ENCODE measurements at regions of chr3 and their contacts with region 1.

Region 1: DNA sequence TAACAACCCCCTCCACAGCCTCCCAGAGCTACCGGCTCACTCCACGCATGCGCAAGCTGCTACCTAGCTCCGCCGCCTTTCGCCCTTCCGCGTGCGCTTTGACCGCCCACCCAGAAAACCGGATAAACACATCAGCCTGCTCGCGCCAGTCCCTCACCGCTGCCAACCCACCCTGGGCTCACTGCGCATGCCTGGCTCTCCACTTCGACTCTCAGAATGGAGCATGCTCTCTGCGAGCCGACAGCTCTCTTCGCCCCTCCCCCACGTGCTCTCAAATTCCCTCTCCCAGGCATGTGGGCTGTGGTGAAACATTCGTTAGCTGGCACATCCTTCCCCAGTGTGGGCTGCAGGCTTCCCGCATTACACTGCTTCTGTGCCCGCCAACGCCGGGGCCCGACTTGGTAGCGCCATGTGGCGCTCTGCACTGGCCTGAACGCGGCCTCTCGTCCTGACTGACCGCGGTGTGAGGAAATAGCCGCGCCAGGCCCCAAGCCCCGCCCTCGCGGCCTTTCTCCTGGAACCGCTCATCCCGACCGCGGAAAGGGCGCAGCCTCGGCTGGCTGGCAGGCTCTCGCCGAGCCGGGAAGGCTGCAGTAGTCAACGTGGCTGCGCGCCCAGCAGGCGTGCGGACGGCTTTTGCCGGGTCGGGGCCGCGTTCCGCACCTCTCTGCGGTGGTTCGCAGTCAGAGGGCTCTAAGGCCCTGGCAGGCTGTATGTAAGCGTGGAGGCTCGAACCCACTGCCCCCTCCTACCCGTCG is 445 bp upstream of the MSL2 start:
- DNase-seq: peak; percentile 95 to 100 (median 98)
- ATAC-seq: peak; percentile 62
- H3K4me3 ChIP-seq: peak overlapping the region; percentile 95
- H3K4me3 Mint-ChIP-seq: peak overlapping the region; percentile 98
- H3K27ac ChIP-seq: peak overlapping the region; percentile 91 to 99
- H3K27ac Mint-ChIP-seq: peak overlapping the region; percentile 98
- H3K4me1 ChIP-seq: peaks cover 16% of the 10 kb centered on the region
- H3K4me1 Mint-ChIP-seq: peaks cover 36% of the 10 kb centered on the region
- H3K27me3 ChIP-seq: no peaks in the 10 kb centered on the region
- H3K27me3 Mint-ChIP-seq: peaks cover 5% of the 10 kb centered on the region
- CTCF ChIP-seq: no peak

Region 2: GRCh38 chr3:135655328-135655727 is 541.3 kb before region 1 on chr3:
- CTCF ChIA-PET with region 1: no interaction called
- POLR2A ChIA-PET with region 1: no interaction called
- intact Hi-C with region 1: no loop called
- DNase-seq: no peak
- ATAC-seq: no peak
- H3K4me3 ChIP-seq: no peak overlapping the region
- H3K4me3 Mint-ChIP-seq: no peak overlapping the region
- H3K27ac ChIP-seq: no peak overlapping the region
- H3K27ac Mint-ChIP-seq: no peak overlapping the region
- H3K4me1 ChIP-seq: no peaks in the 10 kb centered on the region
- H3K4me1 Mint-ChIP-seq: no peaks in the 10 kb centered on the region
- H3K27me3 ChIP-seq: no peaks in the 10 kb centered on the region
- H3K27me3 Mint-ChIP-seq: no peaks in the 10 kb centered on the region
- CTCF ChIP-seq: no peak

Region 3: GRCh38 chr3:135950941-135951340 is 245.6 kb before region 1 on chr3:
- CTCF ChIA-PET with region 1: no interaction called
- POLR2A ChIA-PET with region 1: no interaction called
- intact Hi-C with region 1: no loop called
- DNase-seq: no peak
- ATAC-seq: no peak
- H3K4me3 ChIP-seq: no peak overlapping the region
- H3K4me3 Mint-ChIP-seq: no peak overlapping the region
- H3K27ac ChIP-seq: no peak overlapping the region
- H3K27ac Mint-ChIP-seq: no peak overlapping the region
- H3K4me1 ChIP-seq: no peaks in the 10 kb centered on the region
- H3K4me1 Mint-ChIP-seq: no peaks in the 10 kb centered on the region
- H3K27me3 ChIP-seq: peaks cover 0 to 2% of the 10 kb centered on the region in 2 experiments
- H3K27me3 Mint-ChIP-seq: peaks cover 19% of the 10 kb centered on the region
- CTCF ChIP-seq: no peak

Region 4: GRCh38 chr3:136142592-136142991 is 54.0 kb before region 1 on chr3:
- CTCF ChIA-PET with region 1: interaction called, 3 read pairs
- POLR2A ChIA-PET with region 1: interaction called, 10 read pairs
- intact Hi-C with region 1: no loop called
- DNase-seq: peak in 1 of 14 experiments; percentile 19
- ATAC-seq: peak; percentile 47
- H3K4me3 ChIP-seq: no peak overlapping the region
- H3K4me3 Mint-ChIP-seq: no peak overlapping the region
- H3K27ac ChIP-seq: no peak overlapping the region
- H3K27ac Mint-ChIP-seq: peak overlapping the region; percentile 3
- H3K4me1 ChIP-seq: no peaks in the 10 kb centered on the region
- H3K4me1 Mint-ChIP-seq: peaks cover 23% of the 10 kb centered on the region
- H3K27me3 ChIP-seq: no peaks in the 10 kb centered on the region
- H3K27me3 Mint-ChIP-seq: no peaks in the 10 kb centered on the region
- CTCF ChIP-seq: no peak

Region 5: GRCh38 chr3:136149667-136150066 is 46.9 kb before region 1 on chr3:
- CTCF ChIA-PET with region 1: interaction called, 3 read pairs
- POLR2A ChIA-PET with region 1: interaction called, 10 read pairs
- intact Hi-C with region 1: loop called (anchors 5 kb)
- DNase-seq: no peak
- ATAC-seq: no peak
- H3K4me3 ChIP-seq: no peak overlapping the region
- H3K4me3 Mint-ChIP-seq: peak overlapping the region; percentile 22
- H3K27ac ChIP-seq: no peak overlapping the region
- H3K27ac Mint-ChIP-seq: peak overlapping the region; percentile 61
- H3K4me1 ChIP-seq: peaks cover 6% of the 10 kb centered on the region
- H3K4me1 Mint-ChIP-seq: peaks cover 67% of the 10 kb centered on the region
- H3K27me3 ChIP-seq: no peaks in the 10 kb centered on the region
- H3K27me3 Mint-ChIP-seq: no peaks in the 10 kb centered on the region
- CTCF ChIP-seq: no peak

Region 6: GRCh38 chr3:136186344-136186743 is 10.2 kb before region 1 on chr3:
- CTCF ChIA-PET with region 1: interaction called, 3 read pairs
- POLR2A ChIA-PET with region 1: interaction called, 22 read pairs
- intact Hi-C with region 1: loop called in 1 of 2 experiments (anchors 1 kb)
- DNase-seq: peak in 7 of 14 experiments; percentile 13 to 49 (median 37)
- ATAC-seq: peak; percentile 52
- H3K4me3 ChIP-seq: no peak overlapping the region
- H3K4me3 Mint-ChIP-seq: peak overlapping the region; percentile 70
- H3K27ac ChIP-seq: peak overlapping the region in 1 of 2 donors; percentile 24
- H3K27ac Mint-ChIP-seq: peak overlapping the region; percentile 30
- H3K4me1 ChIP-seq: peaks cover 88% of the 10 kb centered on the region
- H3K4me1 Mint-ChIP-seq: peaks cover 93% of the 10 kb centered on the region
- H3K27me3 ChIP-seq: no peaks in the 10 kb centered on the region
- H3K27me3 Mint-ChIP-seq: no peaks in the 10 kb centered on the region
- CTCF ChIP-seq: no peak

Region 7: GRCh38 chr3:136250226-136250902 is 53.8 kb after region 1 on chr3 and contains the start of gene PCCB:
- CTCF ChIA-PET with region 1: interaction called, 10 read pairs
- POLR2A ChIA-PET with region 1: interaction called, 51 read pairs
- intact Hi-C with region 1: loop called (anchors 1 kb)
- DNase-seq: peak; percentile 85 to 96 (median 90)
- ATAC-seq: peak; percentile 95
- H3K4me3 ChIP-seq: peak within 1 kb of the TSS; percentile 63
- H3K4me3 Mint-ChIP-seq: peak within 1 kb of the TSS; percentile 91
- H3K27ac ChIP-seq: peak within 1 kb of the TSS; percentile 72 to 78
- H3K27ac Mint-ChIP-seq: peak within 1 kb of the TSS; percentile 85
- H3K4me1 ChIP-seq: peaks cover 23% of the 10 kb centered on the region
- H3K4me1 Mint-ChIP-seq: peaks cover 23% of the 10 kb centered on the region
- H3K27me3 ChIP-seq: no peaks in the 10 kb centered on the region
- H3K27me3 Mint-ChIP-seq: no peaks in the 10 kb centered on the region
- CTCF ChIP-seq: peak; percentile 89
- total RNA-seq, gene PCCB: 8.3 to 10.2 TPM

Measured in CD4-positive, alpha-beta T cell (primary cell).